Activated T-helper 2 cell treated with anti-CD3 and anti-CD28 coated beads, Interferon-gamma antibody, Interleukin-2, Interleukin-4, amounts not matched to agents 10 μg/mL and 5 μg/mL and 100 μg/mL, durations not matched to agents 14 hours and 24 hours and 36 hours (primary cell): ENCODE measurements at regions of chr19 and their contacts with region 1.

Region 1: GRCh38 chr19:18291590-18292461 is 10.4 kb upstream of the JUND start:
- DNase-seq: peak; percentile 82
- H3K4me3 Mint-ChIP-seq: peak overlapping the region; percentile 96
- H3K27ac Mint-ChIP-seq: peak overlapping the region; percentile 99
- H3K4me1 Mint-ChIP-seq: peaks cover 56% of the 10 kb centered on the region
- H3K27me3 Mint-ChIP-seq: no peaks in the 10 kb centered on the region

Region 2: GRCh38 chr19:17915951-17916593 is 375.8 kb before region 1 on chr19:
- intact Hi-C with region 1: no loop called
- DNase-seq: no peak
- H3K4me3 Mint-ChIP-seq: no peak overlapping the region
- H3K27ac Mint-ChIP-seq: no peak overlapping the region
- H3K4me1 Mint-ChIP-seq: no peaks in the 10 kb centered on the region
- H3K27me3 Mint-ChIP-seq: no peaks in the 10 kb centered on the region

Region 3: GRCh38 chr19:18097217-18097992 is 194.4 kb before region 1 on chr19 and contains the start of gene MAST3:
- intact Hi-C with region 1: loop called (anchors 10 kb)
- DNase-seq: peak; percentile 88
- H3K4me3 Mint-ChIP-seq: peak within 1 kb of the TSS; percentile 83
- H3K27ac Mint-ChIP-seq: no peak within 1 kb of the TSS
- H3K4me1 Mint-ChIP-seq: peaks cover 26% of the 10 kb centered on the region
- H3K27me3 Mint-ChIP-seq: no peaks in the 10 kb centered on the region
- total RNA-seq, gene MAST3: 16.6 and 17.2 TPM in 2 replicates

Region 4: DNA sequence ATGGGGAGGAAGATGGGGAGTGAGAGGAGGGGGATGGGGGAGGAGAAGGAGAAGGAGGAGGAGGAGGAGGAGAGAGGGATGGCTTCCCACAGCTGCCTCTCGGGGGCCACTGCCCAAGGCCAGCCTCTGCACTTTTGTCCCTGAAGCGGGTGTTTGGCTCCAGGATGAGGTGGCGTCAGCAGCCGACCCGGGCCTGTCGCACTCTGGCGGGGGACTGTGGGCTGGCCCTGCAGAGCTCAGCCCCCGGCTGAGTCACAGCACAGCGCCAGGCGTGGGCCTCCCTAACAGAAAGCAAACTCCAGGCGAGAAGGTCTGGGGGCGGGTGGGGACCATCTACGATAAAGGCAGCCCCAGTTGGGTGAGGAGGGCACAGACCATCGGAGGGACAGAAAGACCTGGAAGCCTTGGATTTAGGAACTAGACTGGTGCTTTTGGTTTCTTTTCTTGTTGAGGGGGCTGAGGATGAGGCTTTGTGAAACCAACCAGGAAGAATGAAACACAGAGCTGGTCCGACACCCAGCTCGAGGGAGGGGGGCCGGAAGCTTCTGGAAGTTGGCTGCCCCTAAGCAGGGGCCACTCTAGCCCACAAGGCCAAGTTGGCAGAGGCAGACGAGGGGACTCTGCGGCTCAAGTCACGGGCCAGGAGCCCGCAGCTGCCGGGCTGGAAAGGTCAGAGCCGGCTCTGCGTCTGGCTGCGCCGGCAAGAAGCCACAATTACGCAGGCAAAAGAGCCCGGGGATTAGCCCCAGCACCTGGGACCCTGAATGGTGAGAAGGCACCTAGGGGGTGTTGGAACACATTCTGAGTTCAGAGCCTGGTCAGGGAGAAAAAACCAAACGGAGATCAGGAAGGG is 12.9 kb after region 1 on chr19:
- intact Hi-C with region 1: loop called (anchors 1 kb)
- DNase-seq: peak; percentile 77
- H3K4me3 Mint-ChIP-seq: peak overlapping the region; percentile 88
- H3K27ac Mint-ChIP-seq: peak overlapping the region; percentile 94
- H3K4me1 Mint-ChIP-seq: peaks cover 32% of the 10 kb centered on the region
- H3K27me3 Mint-ChIP-seq: no peaks in the 10 kb centered on the region

Region 5: DNA sequence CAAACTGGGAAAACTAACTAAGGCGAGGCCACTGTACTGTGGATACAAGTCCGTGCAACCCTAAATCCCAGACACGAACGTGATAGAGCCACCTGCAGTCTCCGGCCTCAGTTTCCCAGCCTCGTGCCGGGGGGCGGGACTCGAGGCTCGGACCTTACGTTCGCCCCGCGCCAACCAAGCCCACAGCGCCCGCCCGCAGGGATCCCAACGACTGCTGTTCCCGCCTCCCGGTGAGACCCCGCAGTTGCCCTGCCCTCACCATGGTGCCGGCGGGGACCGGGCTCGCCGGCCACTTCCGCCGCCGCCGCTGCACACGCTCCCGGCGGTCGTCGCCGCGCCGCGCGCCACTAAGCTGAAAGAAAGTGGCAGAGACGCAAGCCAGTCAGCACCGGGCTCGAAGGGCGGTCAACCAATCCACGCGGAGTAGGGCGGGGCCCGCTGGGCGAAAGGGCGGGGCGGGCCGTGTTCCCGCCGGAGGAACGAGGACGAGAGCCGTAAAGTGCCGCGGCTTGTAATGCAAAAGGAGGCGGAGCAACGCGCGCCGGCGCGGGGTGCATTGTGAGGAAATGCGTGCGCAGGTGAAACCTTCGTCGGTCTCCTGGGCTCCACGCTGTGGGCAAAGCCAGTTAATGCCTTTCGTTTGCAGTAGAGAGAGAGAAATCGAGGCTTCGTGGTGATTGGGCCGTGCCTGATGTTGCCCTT is 31.1 kb after region 1 on chr19 and contains the start of gene LSM4:
- intact Hi-C with region 1: loop called (anchors 1 kb)
- DNase-seq: peak; percentile 99
- H3K4me3 Mint-ChIP-seq: peak within 1 kb of the TSS; percentile 94
- H3K27ac Mint-ChIP-seq: peak within 1 kb of the TSS; percentile 97
- H3K4me1 Mint-ChIP-seq: peaks cover 47% of the 10 kb centered on the region
- H3K27me3 Mint-ChIP-seq: no peaks in the 10 kb centered on the region
- total RNA-seq, gene LSM4: 198 and 208 TPM in 2 replicates